ENCODE measurements at regions of chr22 and their contacts with region 1.

Region 1: GRCh38 chr22:43273902-43274484 is 69.2 kb downstream of the SCUBE1 start:
- DNase-seq: peak; percentile 42
- ATAC-seq: peak; percentile 86
- H3K4me3 Mint-ChIP-seq: no peak overlapping the region
- H3K27ac Mint-ChIP-seq: no peak overlapping the region
- H3K4me1 Mint-ChIP-seq: no peaks in the 10 kb centered on the region
- H3K27me3 Mint-ChIP-seq: no peaks in the 10 kb centered on the region
- CTCF ChIP-seq: peak; percentile 75

Region 2: GRCh38 chr22:43142880-43143562 is 131.0 kb before region 1 on chr22 and contains the start of gene MCAT:
- CTCF ChIA-PET with region 1: no interaction called
- POLR2A ChIA-PET with region 1: no interaction called
- intact Hi-C with region 1: no loop called
- DNase-seq: peak; percentile 77
- ATAC-seq: peak; percentile 90
- H3K4me3 Mint-ChIP-seq: peak within 1 kb of the TSS; percentile 88
- H3K27ac Mint-ChIP-seq: peak within 1 kb of the TSS; percentile 89
- H3K4me1 Mint-ChIP-seq: peaks cover 20% of the 10 kb centered on the region
- H3K27me3 Mint-ChIP-seq: no peaks in the 10 kb centered on the region
- CTCF ChIP-seq: no peak
- total RNA-seq, gene MCAT: 14.8 to 15.0 TPM

Region 3: DNA sequence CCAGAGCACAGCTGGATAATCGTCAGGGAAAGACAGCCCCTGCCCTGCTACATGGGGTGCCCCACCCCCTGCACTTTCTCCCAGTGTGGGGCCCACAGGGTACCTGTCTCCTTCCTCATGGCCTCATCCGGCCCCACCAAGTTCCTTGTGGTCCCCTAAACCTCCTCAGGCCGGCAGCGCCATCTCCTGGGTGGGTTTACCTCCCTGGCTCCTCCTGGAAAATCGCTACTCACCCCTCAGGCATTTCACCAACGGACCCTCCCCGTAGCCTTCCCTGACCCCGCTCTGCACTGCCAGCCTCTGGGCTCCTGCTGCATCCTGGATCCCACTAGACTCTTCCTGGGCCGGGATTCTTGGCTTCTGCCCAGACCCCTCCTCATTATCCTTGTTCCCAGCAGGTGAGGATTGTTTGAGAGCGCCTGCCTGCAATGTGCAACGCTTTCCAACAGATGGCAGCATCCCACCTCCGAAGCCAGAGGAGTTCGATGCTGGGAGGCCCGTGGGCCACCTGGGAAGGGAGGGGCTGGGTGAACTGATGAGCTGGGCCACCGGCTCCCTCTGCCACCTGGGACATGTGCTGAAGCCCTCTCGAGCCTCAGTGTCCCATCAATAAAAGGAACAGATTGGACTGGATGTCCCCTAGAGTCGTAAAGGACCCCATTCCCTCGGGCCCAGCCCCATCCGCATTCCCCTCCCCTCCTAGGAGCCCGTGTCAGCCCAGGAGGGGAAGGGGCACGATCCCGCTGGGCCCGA is 42.8 kb before region 1 on chr22:
- CTCF ChIA-PET with region 1: interaction called, 12 read pairs
- POLR2A ChIA-PET with region 1: no interaction called
- intact Hi-C with region 1: no loop called
- DNase-seq: peak; percentile 77
- ATAC-seq: peak; percentile 90
- H3K4me3 Mint-ChIP-seq: no peak overlapping the region
- H3K27ac Mint-ChIP-seq: no peak overlapping the region
- H3K4me1 Mint-ChIP-seq: peaks cover 5% of the 10 kb centered on the region
- H3K27me3 Mint-ChIP-seq: no peaks in the 10 kb centered on the region
- CTCF ChIP-seq: peak; percentile 99

Region 4: DNA sequence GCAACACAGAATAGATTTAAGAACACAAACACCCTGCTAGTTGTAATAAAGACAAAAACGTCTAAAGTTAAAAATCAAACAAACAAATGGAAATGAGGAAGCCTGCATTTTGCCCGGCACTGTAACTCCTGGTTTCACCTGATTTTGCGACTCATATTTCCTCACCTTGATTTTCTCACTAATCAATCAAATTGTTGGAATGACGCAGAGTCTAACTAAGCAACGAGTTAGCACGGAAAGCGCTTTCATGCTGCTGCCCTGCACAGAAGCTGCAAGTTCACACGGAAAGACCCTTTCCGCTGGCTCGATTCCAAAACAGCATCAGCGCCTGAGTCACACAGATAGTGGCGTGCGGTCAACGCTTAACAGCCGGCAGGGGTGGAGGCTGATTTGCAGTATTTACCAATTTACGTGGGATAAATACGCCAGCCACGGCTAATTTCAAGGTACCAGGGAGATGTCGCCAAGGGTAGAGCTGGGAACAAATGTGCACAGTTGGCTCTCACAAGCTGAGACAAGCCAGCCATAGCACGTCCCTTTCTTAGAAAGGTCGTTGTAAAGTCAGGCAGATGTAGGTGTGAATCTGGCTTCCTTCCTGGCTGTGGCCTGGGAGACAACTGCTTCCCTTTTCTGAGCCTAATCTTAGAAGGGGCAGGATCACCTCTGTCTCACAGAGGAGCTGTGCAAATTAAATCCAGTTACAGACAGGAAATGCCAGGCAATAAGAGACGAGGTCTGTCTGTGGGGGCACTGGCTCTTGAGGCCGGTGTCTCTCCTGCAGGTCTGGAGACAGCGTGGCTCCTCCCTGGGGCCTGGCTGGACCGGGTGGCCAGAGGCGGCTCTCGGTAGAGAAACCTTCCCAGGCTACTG is 10.1 kb before region 1 on chr22:
- CTCF ChIA-PET with region 1: interaction called, 15 read pairs
- POLR2A ChIA-PET with region 1: no interaction called
- intact Hi-C with region 1: no loop called
- DNase-seq: peak; percentile 97
- ATAC-seq: peak; percentile 90
- H3K4me3 Mint-ChIP-seq: peak overlapping the region; percentile 54
- H3K27ac Mint-ChIP-seq: peak overlapping the region; percentile 84
- H3K4me1 Mint-ChIP-seq: peaks cover 24% of the 10 kb centered on the region
- H3K27me3 Mint-ChIP-seq: no peaks in the 10 kb centered on the region
- CTCF ChIP-seq: no peak

Region 5: DNA sequence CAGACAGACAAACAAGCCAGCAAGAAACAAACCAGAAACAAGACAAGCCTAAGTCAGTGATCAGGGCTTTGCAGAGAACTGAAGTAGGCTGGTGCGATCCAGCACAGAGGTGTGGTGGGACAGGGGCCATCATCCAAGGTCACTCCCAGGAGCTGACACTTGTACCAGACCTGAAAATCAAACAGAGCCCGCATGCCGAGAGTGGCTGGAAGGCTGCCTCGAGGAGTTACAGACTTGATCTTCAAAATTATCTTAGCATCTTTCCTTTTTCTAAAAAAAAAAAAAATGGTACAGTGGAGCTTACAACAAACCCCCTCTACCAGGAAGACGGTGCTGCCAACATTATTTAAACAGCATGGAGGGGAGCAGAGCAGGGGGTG is 78.0 kb after region 1 on chr22:
- CTCF ChIA-PET with region 1: interaction called, 68 read pairs
- POLR2A ChIA-PET with region 1: no interaction called
- intact Hi-C with region 1: loop called (anchors 5 kb)
- DNase-seq: no peak
- ATAC-seq: no peak
- H3K4me3 Mint-ChIP-seq: no peak overlapping the region
- H3K27ac Mint-ChIP-seq: no peak overlapping the region
- H3K4me1 Mint-ChIP-seq: no peaks in the 10 kb centered on the region
- H3K27me3 Mint-ChIP-seq: peaks cover 11% of the 10 kb centered on the region
- CTCF ChIP-seq: no peak

Region 6: DNA sequence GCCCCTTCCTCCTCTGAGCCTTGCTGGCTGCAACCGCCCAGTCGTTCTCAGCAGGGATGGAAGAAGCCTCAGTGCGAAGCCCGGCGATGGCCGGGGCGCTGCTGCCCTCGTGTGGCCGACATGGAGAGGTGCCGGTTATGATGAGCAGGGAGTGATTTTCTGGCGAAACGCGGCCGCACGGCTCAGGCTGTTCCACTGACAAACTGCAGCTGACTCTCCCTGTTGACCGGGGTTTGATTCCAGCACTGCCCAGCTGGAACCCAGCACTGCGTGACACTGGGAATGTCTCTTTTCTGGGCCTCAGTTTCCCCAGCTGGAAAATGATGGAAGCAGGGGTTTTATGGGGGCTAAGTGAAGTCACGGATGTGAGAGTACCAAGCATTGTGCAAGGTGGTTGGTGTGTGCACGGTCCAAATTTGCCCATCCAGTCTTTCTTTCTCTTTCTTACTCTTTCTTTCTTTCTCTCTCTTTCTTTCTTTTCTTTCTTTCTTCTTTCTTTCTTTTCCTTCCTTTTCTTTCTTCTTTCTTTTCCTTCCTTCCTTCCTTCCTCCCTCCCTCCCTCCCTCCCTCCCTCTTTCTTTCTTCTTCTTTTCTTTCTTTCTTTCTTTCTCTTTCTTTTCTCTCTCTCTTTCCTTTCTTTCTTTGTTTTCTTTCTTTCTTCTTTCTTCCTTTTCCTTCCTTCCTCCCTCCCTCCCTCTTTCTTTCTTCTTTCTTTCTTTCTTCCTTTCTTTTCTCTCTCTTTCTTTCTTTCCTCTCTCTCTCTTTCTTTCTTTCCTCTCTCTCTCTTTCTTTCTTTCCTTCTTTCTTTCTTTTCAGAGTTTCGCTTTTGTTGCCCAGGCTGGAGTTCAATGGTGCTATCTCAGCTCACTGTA is 112.0 kb after region 1 on chr22:
- CTCF ChIA-PET with region 1: interaction called, 8 read pairs
- POLR2A ChIA-PET with region 1: no interaction called
- intact Hi-C with region 1: loop called (anchors 10 kb)
- DNase-seq: peak; percentile 78
- ATAC-seq: peak; percentile 89
- H3K4me3 Mint-ChIP-seq: no peak overlapping the region
- H3K27ac Mint-ChIP-seq: no peak overlapping the region
- H3K4me1 Mint-ChIP-seq: peaks cover 5% of the 10 kb centered on the region
- H3K27me3 Mint-ChIP-seq: peaks cover 23% of the 10 kb centered on the region
- CTCF ChIP-seq: peak; percentile 65

Measured in activated CD8-positive, alpha-beta T cell treated with anti-CD3 and anti-CD28 coated beads for 36 hours (primary cell).